ENCODE measurements at regions of chr14 and their contacts with region 1.

Region 1: GRCh38 chr14:39179042-39179441 is 4.0 kb downstream of the PNN start:
- DNase-seq: no peak
- H3K4me3 ChIP-seq: no peak overlapping the region
- H3K27me3 ChIP-seq: no peaks in the 10 kb centered on the region
- CTCF ChIP-seq: no peak

Region 2: DNA sequence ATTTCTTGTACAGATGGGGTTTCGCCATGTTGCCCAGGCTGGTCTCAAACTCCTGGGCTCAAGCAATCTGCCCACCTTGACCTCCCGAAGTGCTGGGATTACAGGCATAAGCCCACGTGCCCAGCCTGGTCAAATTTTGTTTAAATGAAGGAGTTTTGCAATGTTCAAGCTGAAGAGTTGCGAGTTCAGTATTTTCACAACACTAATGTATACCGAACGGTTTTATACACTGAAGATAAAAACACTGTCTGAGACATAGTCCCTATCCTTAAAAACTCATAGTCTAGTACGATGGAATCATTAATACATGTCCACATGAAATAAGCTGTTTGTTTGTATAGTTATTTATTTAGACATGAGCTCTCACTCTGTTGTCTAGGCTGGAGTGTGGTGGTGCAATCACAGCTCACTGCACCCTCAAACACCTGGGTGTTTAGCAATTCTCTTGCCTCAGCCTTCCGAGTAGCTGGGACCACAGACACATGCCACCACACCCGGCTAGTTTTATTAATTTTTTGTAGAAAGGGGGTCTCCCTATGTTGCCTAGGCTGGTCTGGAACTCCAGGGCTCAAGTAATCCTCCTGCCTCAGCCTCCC is 24.4 kb before region 1 on chr14:
- CTCF ChIA-PET with region 1: no interaction called
- POLR2A ChIA-PET with region 1: interaction called, 19 read pairs
- DNase-seq: no peak
- H3K4me3 ChIP-seq: no peak overlapping the region
- H3K27me3 ChIP-seq: no peaks in the 10 kb centered on the region
- CTCF ChIP-seq: no peak